Activated CD4-positive, alpha-beta memory T cell treated with anti-CD3 and anti-CD28 coated beads, Interleukin-2, amount 10 ng/mL, durations not matched to agents 7 days and 5 days (primary cell): ENCODE measurements at regions of chr18 and their contacts with region 1.

Region 1: GRCh38 chr18:46173393-46174341 is 69.5 kb downstream of the HAUS1 start:
- DNase-seq: peak; percentile 93
- H3K4me3 Mint-ChIP-seq: peak overlapping the region; percentile 99
- H3K27ac Mint-ChIP-seq: peak overlapping the region; percentile 98
- H3K4me1 Mint-ChIP-seq: peaks cover 60% of the 10 kb centered on the region
- H3K27me3 Mint-ChIP-seq: peaks cover 3% of the 10 kb centered on the region

Region 2: GRCh38 chr18:46051731-46052461 is 121.8 kb before region 1 on chr18:
- CTCF ChIA-PET with region 1: no interaction called
- POLR2A ChIA-PET with region 1: no interaction called
- DNase-seq: no peak
- H3K4me3 Mint-ChIP-seq: no peak overlapping the region
- H3K27ac Mint-ChIP-seq: no peak overlapping the region
- H3K4me1 Mint-ChIP-seq: peaks cover 40% of the 10 kb centered on the region
- H3K27me3 Mint-ChIP-seq: no peaks in the 10 kb centered on the region

Region 3: DNA sequence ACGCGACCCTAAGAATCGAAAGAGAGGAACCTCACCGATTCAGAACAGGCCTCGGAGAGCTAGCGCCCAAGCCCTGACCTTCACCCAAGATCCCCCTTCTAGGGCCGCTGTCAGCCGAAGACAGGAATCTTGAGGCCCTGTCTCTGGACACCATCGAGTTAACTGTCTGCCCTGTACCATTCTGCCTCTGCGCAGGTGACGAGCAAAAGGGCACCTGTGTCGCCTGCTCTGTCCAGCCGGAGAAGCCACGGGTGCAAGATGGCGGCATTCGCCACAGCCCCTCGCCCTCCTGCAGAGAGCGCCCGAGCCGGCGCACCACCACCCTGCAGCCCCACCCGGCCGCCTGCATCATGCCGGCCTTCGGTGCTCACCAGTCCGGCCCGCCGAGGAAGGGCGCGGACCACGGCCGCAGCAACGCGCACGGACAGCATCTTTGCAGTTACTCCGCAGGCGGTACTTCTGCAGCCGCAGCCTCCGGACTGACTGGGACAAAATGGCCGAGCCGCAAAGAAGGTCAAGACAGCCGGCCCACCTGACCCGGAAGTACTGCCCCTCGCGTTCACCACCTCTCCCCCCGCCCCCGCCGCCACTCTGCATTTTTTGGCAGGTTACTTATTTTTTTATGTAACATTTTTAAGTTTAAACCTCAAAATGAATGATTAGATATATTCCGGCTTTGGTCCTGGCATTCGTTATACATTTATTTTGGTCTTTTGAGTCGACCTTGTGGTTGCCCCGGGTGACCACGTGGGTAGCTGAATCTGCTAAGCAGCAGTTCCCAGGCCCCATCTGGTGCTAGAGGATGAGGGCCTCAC is 75.7 kb before region 1 on chr18 and contains the start of gene ATP5F1A:
- CTCF ChIA-PET with region 1: interaction called, 16 read pairs
- POLR2A ChIA-PET with region 1: interaction called, 5 read pairs
- DNase-seq: peak; percentile 90
- H3K4me3 Mint-ChIP-seq: peak within 1 kb of the TSS; percentile 98
- H3K27ac Mint-ChIP-seq: peak within 1 kb of the TSS; percentile 97
- H3K4me1 Mint-ChIP-seq: peaks cover 27% of the 10 kb centered on the region
- H3K27me3 Mint-ChIP-seq: no peaks in the 10 kb centered on the region
- total RNA-seq, gene ATP5F1A: 282 to 287 TPM

Region 4: GRCh38 chr18:46155641-46156051 is 18.0 kb before region 1 on chr18:
- CTCF ChIA-PET with region 1: interaction called, 160 read pairs
- POLR2A ChIA-PET with region 1: interaction called, 128 read pairs
- DNase-seq: peak; percentile 74
- H3K4me3 Mint-ChIP-seq: peak overlapping the region; percentile 49
- H3K27ac Mint-ChIP-seq: peak overlapping the region; percentile 98
- H3K4me1 Mint-ChIP-seq: peaks cover 71% of the 10 kb centered on the region
- H3K27me3 Mint-ChIP-seq: peaks cover 6% of the 10 kb centered on the region

Region 5: GRCh38 chr18:46190667-46191066 is 17.0 kb after region 1 on chr18:
- CTCF ChIA-PET with region 1: interaction called, 23 read pairs
- POLR2A ChIA-PET with region 1: interaction called, 36 read pairs
- DNase-seq: no peak
- H3K4me3 Mint-ChIP-seq: no peak overlapping the region
- H3K27ac Mint-ChIP-seq: no peak overlapping the region
- H3K4me1 Mint-ChIP-seq: peaks cover 17% of the 10 kb centered on the region
- H3K27me3 Mint-ChIP-seq: no peaks in the 10 kb centered on the region

Region 6: DNA sequence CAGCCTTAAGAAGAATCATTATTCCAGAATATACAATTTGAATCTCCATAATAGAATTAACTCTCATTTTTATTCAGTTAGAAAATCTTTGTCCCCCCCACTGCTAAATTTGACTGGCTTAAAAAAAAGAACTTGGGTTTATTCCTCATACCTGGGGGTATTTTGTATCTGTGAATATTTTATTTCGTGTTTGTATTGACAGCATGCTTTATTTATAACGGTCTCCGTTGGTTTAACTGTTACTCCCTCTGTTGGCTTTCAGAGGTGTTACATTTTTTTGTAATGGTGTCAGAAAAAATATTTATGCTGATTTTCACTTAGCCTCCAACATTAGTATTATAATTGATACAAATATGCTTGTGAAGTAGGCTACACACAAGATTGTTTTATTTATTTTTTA is 39.6 kb after region 1 on chr18:
- CTCF ChIA-PET with region 1: interaction called, 133 read pairs
- POLR2A ChIA-PET with region 1: interaction called, 25 read pairs
- DNase-seq: no peak
- H3K4me3 Mint-ChIP-seq: no peak overlapping the region
- H3K27ac Mint-ChIP-seq: no peak overlapping the region
- H3K4me1 Mint-ChIP-seq: peaks cover 54% of the 10 kb centered on the region
- H3K27me3 Mint-ChIP-seq: no peaks in the 10 kb centered on the region

Region 7: DNA sequence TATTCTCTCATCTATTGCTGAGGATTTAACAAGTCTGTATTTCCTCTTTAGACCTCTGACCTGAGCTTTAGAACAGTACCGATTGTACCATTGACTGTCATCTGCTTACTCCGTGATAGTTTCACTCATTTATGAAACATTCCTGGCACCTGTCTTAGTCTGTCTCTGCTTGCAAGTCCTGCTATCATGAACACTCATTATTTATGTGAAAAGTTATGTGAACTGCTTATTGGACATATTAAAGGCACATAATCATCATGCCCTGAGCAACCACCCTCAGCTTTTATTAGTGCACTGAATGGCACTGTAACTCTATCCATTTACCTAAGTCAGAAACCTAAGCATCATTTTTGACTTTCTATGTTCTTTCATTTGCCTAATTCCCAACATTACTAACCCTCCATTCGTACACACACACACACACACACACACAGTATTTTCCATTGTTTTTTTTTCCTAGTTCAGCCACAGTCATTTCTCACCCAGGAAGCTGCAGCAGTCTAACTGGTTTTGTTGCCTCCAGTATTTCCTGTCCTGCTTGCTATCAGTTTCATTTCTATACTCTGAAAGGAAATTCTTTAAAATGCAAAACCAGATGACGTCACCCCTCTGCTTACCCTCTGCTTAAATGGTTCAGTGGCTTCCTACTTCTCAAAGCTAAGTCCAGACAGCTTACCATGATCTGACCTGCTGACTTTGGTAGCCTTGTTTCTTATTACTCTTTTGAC is 76.6 kb after region 1 on chr18:
- CTCF ChIA-PET with region 1: interaction called, 30 read pairs
- POLR2A ChIA-PET with region 1: interaction called, 15 read pairs
- DNase-seq: peak; percentile 65
- H3K4me3 Mint-ChIP-seq: peak overlapping the region; percentile 76
- H3K27ac Mint-ChIP-seq: peak overlapping the region; percentile 96
- H3K4me1 Mint-ChIP-seq: peaks cover 56% of the 10 kb centered on the region
- H3K27me3 Mint-ChIP-seq: no peaks in the 10 kb centered on the region

Region 8: DNA sequence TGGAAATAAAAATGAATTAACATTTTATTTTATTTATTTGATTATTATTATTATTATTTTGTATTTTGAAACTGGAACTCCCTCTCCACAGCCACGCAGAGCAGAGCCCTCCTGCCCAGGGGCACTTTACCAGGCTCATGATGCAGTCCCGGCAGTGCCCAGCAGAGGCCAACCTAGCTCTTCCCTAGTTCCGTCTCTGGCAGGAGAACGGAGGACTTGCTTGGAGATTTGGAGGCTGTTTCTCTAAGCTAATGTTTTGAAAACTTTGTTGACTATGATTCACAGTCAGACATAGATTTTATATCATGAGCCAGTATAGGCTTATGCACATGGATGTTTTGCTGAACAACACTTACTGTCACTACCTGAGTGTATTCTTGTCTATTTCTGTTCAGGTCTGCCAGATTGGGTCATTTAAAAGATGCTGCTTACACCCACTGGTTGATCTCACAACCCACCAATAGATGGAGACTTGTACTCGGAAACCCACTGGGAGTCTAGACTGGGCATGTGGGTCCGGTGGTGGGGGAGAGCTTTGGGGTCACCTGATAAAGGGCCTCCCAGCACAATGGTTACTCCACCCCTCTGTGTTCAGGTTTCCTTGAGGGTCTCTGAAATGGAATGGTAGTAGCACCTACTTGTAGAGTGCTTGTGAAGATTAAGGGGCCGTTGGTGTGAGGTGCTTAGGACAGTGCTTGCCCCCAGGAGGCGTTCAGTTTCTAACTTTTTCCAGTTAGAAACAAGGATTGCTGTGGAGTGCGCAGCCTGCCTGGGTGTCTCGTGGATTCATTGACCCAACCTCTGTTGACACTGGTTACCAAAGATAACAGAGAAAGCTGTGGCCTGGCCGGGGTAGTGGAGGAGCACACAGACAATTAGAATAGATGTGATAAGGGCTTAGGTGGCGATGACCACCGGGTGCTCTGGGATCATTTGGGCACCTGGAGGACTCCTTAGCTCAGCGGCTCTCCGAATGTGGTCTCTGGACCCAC is 107.8 kb after region 1 on chr18:
- CTCF ChIA-PET with region 1: interaction called, 21 read pairs
- POLR2A ChIA-PET with region 1: interaction called, 5 read pairs
- DNase-seq: peak; percentile 69
- H3K4me3 Mint-ChIP-seq: no peak overlapping the region
- H3K27ac Mint-ChIP-seq: no peak overlapping the region
- H3K4me1 Mint-ChIP-seq: peaks cover 11% of the 10 kb centered on the region
- H3K27me3 Mint-ChIP-seq: no peaks in the 10 kb centered on the region